MCF 10A (cell line): ENCODE measurements at regions of chr11 and their contacts with region 1.

Region 1: DNA sequence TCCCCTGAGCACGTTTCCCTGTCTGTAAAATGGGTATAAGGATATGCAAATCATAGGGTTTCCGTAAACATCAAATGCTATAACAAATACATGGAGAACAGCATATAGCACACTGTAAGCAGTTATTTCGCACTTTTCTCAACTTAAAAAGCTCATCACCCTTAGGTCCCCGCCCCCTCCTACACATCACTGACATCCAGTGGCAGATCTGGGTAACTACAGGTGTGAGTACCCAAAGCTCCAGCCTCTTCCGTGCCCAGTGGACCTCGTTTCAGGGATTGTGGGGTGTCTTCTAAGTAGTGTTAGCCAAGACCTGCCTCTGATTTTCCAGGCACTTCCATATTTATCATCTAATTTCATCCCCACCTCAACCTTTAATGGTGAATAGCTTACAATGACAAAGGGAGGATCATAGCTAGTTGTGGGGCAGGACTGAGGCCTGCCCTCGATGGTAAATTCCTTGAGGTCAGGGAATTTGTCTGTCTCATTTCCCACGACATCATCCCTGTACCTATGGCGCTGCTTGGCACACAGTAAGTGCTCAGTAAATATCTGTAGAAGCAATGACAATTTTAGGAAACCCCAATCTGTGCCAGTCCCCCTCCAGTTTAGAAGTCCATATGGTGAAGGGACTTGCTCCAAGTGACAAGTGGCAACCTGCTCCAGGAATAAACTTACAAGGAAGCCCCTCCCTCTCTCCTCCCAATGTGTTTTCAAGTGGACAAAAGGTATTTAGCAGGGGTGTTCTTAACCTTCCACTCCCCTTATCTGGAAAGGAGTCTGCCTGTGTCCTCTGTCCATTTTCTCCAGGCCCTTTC is 340.5 kb downstream of the TENM4 start:
- DNase-seq: peak; percentile 76
- H3K4me3 Mint-ChIP-seq: no peak overlapping the region
- H3K27ac Mint-ChIP-seq: no peak overlapping the region
- H3K4me1 Mint-ChIP-seq: peaks cover 24% of the 10 kb centered on the region
- H3K27me3 Mint-ChIP-seq: no peaks in the 10 kb centered on the region
- CTCF ChIP-seq: peak; percentile 75

Region 2: GRCh38 chr11:78798660-78799059 is 301.6 kb before region 1 on chr11:
- CTCF ChIA-PET with region 1: interaction called, 4 read pairs
- POLR2A ChIA-PET with region 1: no interaction called
- intact Hi-C with region 1: loop called (anchors 1 kb)
- DNase-seq: peak; percentile 71
- H3K4me3 Mint-ChIP-seq: no peak overlapping the region
- H3K27ac Mint-ChIP-seq: no peak overlapping the region
- H3K4me1 Mint-ChIP-seq: peaks cover 23% of the 10 kb centered on the region
- H3K27me3 Mint-ChIP-seq: no peaks in the 10 kb centered on the region
- CTCF ChIP-seq: peak; percentile 66

Region 3: GRCh38 chr11:79062814-79063762 is 37.2 kb before region 1 on chr11:
- CTCF ChIA-PET with region 1: interaction called, 23 read pairs
- POLR2A ChIA-PET with region 1: no interaction called
- intact Hi-C with region 1: loop called (anchors 1 kb)
- DNase-seq: peak; percentile 65
- H3K4me3 Mint-ChIP-seq: no peak overlapping the region
- H3K27ac Mint-ChIP-seq: no peak overlapping the region
- H3K4me1 Mint-ChIP-seq: no peaks in the 10 kb centered on the region
- H3K27me3 Mint-ChIP-seq: no peaks in the 10 kb centered on the region
- CTCF ChIP-seq: peak; percentile 47

Region 4: DNA sequence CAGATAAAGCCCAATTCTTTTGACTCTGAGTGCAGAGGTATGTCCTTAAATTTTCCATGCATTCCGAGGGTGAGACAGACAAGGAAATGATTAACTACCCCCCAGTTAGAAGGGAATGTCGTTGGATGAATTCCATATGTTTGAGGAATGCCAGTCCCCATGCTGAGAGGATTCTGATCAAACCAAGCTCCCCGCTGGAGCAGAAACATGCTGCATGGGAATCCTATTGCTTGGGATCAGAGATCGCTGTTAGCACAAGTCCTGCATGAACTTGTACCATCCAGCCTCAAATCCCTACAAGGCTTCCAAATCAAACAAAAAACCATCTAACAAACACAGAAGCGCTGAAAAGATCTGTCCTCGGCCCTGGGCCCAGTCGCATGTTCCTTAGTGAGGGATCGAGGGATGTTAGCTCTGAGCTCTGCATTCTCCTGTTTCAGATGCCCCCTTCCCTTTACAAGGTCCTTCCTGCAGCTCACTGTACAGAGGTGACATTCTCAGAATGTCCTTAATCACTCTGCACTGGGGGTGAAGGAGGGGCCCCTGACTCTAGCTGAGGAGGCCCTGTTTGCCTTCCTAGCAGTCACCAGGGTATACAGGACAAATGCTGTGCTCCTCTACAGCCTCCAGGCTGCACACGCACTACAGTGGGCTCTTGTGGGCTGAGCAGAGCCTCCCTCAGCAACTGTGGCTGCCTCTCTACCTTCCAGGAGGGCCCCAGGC is 12.9 kb before region 1 on chr11:
- CTCF ChIA-PET with region 1: interaction called, 14 read pairs
- POLR2A ChIA-PET with region 1: interaction called, 5 read pairs
- intact Hi-C with region 1: no loop called
- DNase-seq: peak; percentile 28
- H3K4me3 Mint-ChIP-seq: no peak overlapping the region
- H3K27ac Mint-ChIP-seq: no peak overlapping the region
- H3K4me1 Mint-ChIP-seq: peaks cover 16% of the 10 kb centered on the region
- H3K27me3 Mint-ChIP-seq: no peaks in the 10 kb centered on the region
- CTCF ChIP-seq: no peak

Region 5: GRCh38 chr11:79352349-79352703 is 252.0 kb after region 1 on chr11:
- CTCF ChIA-PET with region 1: no interaction called
- POLR2A ChIA-PET with region 1: no interaction called
- intact Hi-C with region 1: no loop called
- DNase-seq: no peak
- H3K4me3 Mint-ChIP-seq: no peak overlapping the region
- H3K27ac Mint-ChIP-seq: peak overlapping the region; percentile 5
- H3K4me1 Mint-ChIP-seq: peaks cover 6% of the 10 kb centered on the region
- H3K27me3 Mint-ChIP-seq: no peaks in the 10 kb centered on the region
- CTCF ChIP-seq: no peak

Region 6: GRCh38 chr11:79512706-79513469 is 412.6 kb after region 1 on chr11:
- CTCF ChIA-PET with region 1: no interaction called
- POLR2A ChIA-PET with region 1: no interaction called
- intact Hi-C with region 1: no loop called
- DNase-seq: no peak
- H3K4me3 Mint-ChIP-seq: no peak overlapping the region
- H3K27ac Mint-ChIP-seq: no peak overlapping the region
- H3K4me1 Mint-ChIP-seq: peaks cover 2% of the 10 kb centered on the region
- H3K27me3 Mint-ChIP-seq: peaks cover 17% of the 10 kb centered on the region
- CTCF ChIP-seq: no peak